AG04450 (cell line): ENCODE measurements at regions of chr2 and their contacts with region 1.

Region 1: GRCh38 chr2:237413777-237414661 is at the start of gene COL6A3:
- DNase-seq: peak; percentile 96
- H3K4me3 ChIP-seq: peak within 1 kb of the TSS; percentile 100
- H3K27ac ChIP-seq: peak within 1 kb of the TSS; percentile 94
- H3K27me3 ChIP-seq: no peaks in the 10 kb centered on the region
- CTCF ChIP-seq: no peak
- polyA plus RNA-seq, gene COL6A3: 1,384 and 2,107 TPM in 2 replicates

Region 2: GRCh38 chr2:237060534-237061312 is 353.3 kb before region 1 on chr2:
- CTCF ChIA-PET with region 1: no interaction called
- POLR2A ChIA-PET with region 1: no interaction called
- DNase-seq: peak; percentile 30
- H3K4me3 ChIP-seq: no peak overlapping the region
- H3K27ac ChIP-seq: no peak overlapping the region
- H3K27me3 ChIP-seq: no peaks in the 10 kb centered on the region
- CTCF ChIP-seq: peak; percentile 73

Region 3: GRCh38 chr2:237122214-237122666 is 291.8 kb before region 1 on chr2:
- CTCF ChIA-PET with region 1: interaction called, 24 read pairs
- POLR2A ChIA-PET with region 1: no interaction called
- DNase-seq: peak; percentile 54
- H3K4me3 ChIP-seq: no peak overlapping the region
- H3K27ac ChIP-seq: no peak overlapping the region
- H3K27me3 ChIP-seq: no peaks in the 10 kb centered on the region
- CTCF ChIP-seq: peak; percentile 74

Region 4: DNA sequence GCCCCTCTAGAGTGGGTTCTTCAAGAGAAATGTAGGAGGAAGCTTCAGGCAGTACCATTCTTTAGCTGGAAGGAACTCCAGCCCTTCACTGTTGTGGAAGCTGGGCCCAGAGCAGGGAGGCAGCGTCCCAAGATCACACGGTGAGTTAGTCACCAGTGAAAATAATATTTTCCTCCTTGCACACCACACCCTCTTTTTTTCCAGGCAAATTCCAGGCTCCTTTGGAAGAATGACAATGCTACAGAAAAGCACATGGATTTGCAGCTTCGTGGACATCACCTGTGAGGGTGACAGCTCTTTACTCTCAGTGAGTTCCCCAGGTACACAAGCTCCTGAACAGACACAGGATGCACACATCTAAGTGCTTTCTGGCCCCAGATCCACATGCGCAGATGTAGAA is 157.1 kb before region 1 on chr2:
- CTCF ChIA-PET with region 1: no interaction called
- POLR2A ChIA-PET with region 1: interaction called, 19 read pairs
- DNase-seq: no peak
- H3K4me3 ChIP-seq: no peak overlapping the region
- H3K27ac ChIP-seq: peak overlapping the region; percentile 98
- H3K27me3 ChIP-seq: no peaks in the 10 kb centered on the region
- CTCF ChIP-seq: no peak

Region 5: GRCh38 chr2:237456200-237456843 is 42.3 kb after region 1 on chr2:
- CTCF ChIA-PET with region 1: interaction called, 7 read pairs
- POLR2A ChIA-PET with region 1: interaction called, 10 read pairs
- DNase-seq: peak; percentile 97
- H3K4me3 ChIP-seq: no peak overlapping the region
- H3K27ac ChIP-seq: peak overlapping the region; percentile 93
- H3K27me3 ChIP-seq: no peaks in the 10 kb centered on the region
- CTCF ChIP-seq: 0 out of 2 replicates have a peak, but pooled peaks have one; percentile 9

Region 6: GRCh38 chr2:237474931-237475703 is 61.1 kb after region 1 on chr2:
- CTCF ChIA-PET with region 1: interaction called, 28 read pairs
- POLR2A ChIA-PET with region 1: interaction called, 25 read pairs
- DNase-seq: peak; percentile 51
- H3K4me3 ChIP-seq: peak overlapping the region; percentile 64
- H3K27ac ChIP-seq: peak overlapping the region; percentile 90
- H3K27me3 ChIP-seq: no peaks in the 10 kb centered on the region
- CTCF ChIP-seq: peak; percentile 74